ENCODE measurements at regions of chr1 and their contacts with region 1.

Region 1: GRCh38 chr1:176691251-176692228 is 228.6 kb downstream of the PAPPA2 start:
- DNase-seq: peak in 1 of 2 donors; percentile 57
- ATAC-seq: peak; percentile 49 to 78 (median 72)
- H3K4me3 ChIP-seq: no peak overlapping the region
- H3K27ac ChIP-seq: peak overlapping the region; percentile 48 to 90 (median 81)
- H3K4me1 ChIP-seq: peaks cover 0 to 41% (median 12%) of the 10 kb centered on the region in 9 donors
- H3K27me3 ChIP-seq: no peaks in the 10 kb centered on the region
- CTCF ChIP-seq: peak; percentile 29 to 75 (median 65)

Region 2: DNA sequence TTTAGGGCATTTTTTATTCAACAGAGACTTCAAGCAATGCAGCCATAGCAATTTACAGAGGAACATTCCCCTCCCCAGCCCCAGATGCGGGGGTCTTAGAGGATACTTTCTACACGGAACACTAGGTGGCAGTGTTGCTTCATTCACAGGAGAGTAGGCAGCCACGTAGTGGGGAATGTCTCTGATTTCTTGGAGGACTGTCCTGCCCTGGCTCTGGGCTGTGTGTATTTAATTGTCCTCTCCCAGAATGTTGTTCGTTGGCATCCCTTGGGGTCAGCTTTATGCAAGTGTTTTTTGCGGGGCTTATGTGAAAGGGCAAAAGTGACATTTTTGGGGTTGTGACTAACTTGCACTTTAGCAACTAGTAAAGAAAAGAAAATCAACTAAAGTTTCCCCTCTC is 131.7 kb before region 1 on chr1:
- intact Hi-C with region 1: loop called in 9 of 10 experiments (anchors 1 to 10 kb)
- DNase-seq: peak in 1 of 2 donors; percentile 62
- ATAC-seq: peak; percentile 79 to 96 (median 92)
- H3K4me3 ChIP-seq: no peak overlapping the region
- H3K27ac ChIP-seq: no peak overlapping the region
- H3K4me1 ChIP-seq: peaks cover 0 to 11% (median 2%) of the 10 kb centered on the region in 9 donors
- H3K27me3 ChIP-seq: peaks cover 0 to 14% (median 5%) of the 10 kb centered on the region in 7 donors
- CTCF ChIP-seq: peak; percentile 69 to 92 (median 85)

Region 3: DNA sequence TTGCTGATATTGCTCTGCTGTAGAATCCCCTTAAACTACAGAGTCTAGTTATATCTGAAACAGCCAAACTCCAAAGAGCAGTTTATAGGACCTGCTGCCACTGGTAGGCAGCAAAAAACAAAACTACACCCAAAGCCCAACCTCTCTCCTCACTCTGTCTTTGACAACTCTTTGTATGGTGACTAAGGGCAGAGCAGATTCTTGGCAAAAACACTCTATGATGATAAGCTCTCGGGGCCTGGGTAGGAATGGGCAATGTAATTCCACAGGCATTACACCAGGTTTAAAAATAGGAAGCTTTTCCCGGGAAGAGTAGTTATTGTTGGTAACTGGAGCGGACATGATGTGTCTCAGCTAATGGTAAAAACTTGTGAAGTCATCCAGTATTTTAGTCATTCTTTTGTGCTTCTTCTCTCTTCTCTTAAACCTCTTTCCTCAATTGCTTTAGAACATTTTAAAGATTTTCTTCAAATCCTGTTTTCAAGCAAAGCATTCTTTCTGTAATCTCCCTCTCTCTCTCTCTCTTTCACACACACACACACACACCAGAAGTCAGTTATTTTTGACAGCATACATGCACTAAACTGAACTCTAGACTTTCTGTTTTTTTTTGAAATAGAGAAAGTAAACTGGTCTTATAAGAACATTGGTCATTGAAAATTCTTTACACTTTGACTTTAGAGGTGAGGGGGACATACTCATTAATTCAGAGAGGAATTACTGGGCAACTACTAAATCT is 35.1 kb before region 1 on chr1:
- intact Hi-C with region 1: loop called in 5 of 10 experiments (anchors 1 to 5 kb)
- DNase-seq: peak in 1 of 2 donors; percentile 65
- ATAC-seq: peak; percentile 95 to 100 (median 98)
- H3K4me3 ChIP-seq: no peak overlapping the region
- H3K27ac ChIP-seq: peak overlapping the region; percentile 74 to 95 (median 86)
- H3K4me1 ChIP-seq: peaks cover 0 to 22% (median 6%) of the 10 kb centered on the region in 9 donors
- H3K27me3 ChIP-seq: no peaks in the 10 kb centered on the region
- CTCF ChIP-seq: peak in 3 of 9 donors; percentile 42 to 45 (median 44)

Region 4: GRCh38 chr1:176789571-176790090 is 98.1 kb after region 1 on chr1:
- intact Hi-C with region 1: no loop called
- DNase-seq: no peak
- ATAC-seq: no peak
- H3K4me3 ChIP-seq: no peak overlapping the region
- H3K27ac ChIP-seq: no peak overlapping the region
- H3K4me1 ChIP-seq: peaks cover 0 to 16% (median 0%) of the 10 kb centered on the region in 9 donors
- H3K27me3 ChIP-seq: no peaks in the 10 kb centered on the region
- CTCF ChIP-seq: no peak

Region 5: GRCh38 chr1:176843352-176844297 is 152.1 kb after region 1 on chr1:
- intact Hi-C with region 1: loop called in 9 of 10 experiments (anchors 1 to 10 kb)
- DNase-seq: peak in 1 of 2 donors; percentile 19
- ATAC-seq: peak in 7 of 8 donors; percentile 40 to 72 (median 54)
- H3K4me3 ChIP-seq: no peak overlapping the region
- H3K27ac ChIP-seq: no peak overlapping the region
- H3K4me1 ChIP-seq: peaks cover 0 to 37% (median 5%) of the 10 kb centered on the region in 9 donors
- H3K27me3 ChIP-seq: no peaks in the 10 kb centered on the region
- CTCF ChIP-seq: peak; percentile 26 to 74 (median 61)

Region 6: GRCh38 chr1:176857632-176858031 is 166.1 kb after region 1 on chr1:
- intact Hi-C with region 1: no loop called
- DNase-seq: no peak
- ATAC-seq: peak in 4 of 8 donors; percentile 25 to 85 (median 38)
- H3K4me3 ChIP-seq: no peak overlapping the region
- H3K27ac ChIP-seq: no peak overlapping the region
- H3K4me1 ChIP-seq: peaks cover 0 to 15% (median 0%) of the 10 kb centered on the region in 9 donors
- H3K27me3 ChIP-seq: no peaks in the 10 kb centered on the region
- CTCF ChIP-seq: no peak

Measured in heart right ventricle (tissue), 16 donors.